ENCODE measurements at regions of chr6 and their contacts with region 1.

Region 1: GRCh38 chr6:33391278-33391921 is at the start of gene KIFC1:
- DNase-seq: peak; percentile 100
- H3K4me3 ChIP-seq: peak within 1 kb of the TSS; percentile 67 to 93 (median 91)
- H3K27ac ChIP-seq: peak within 1 kb of the TSS; percentile 88
- H3K4me1 ChIP-seq: peaks cover 37% of the 10 kb centered on the region
- H3K27me3 ChIP-seq: no peaks in the 10 kb centered on the region
- CTCF ChIP-seq: peak; percentile 88 to 94
- total RNA-seq, gene KIFC1: 2.8 to 36.7 TPM

Region 2: GRCh38 chr6:33208091-33208967 is 183.1 kb before region 1 on chr6 and contains the start of gene RING1:
- CTCF ChIA-PET with region 1: no interaction called
- dilution Hi-C with region 1: no loop called
- in situ Hi-C with region 1: no loop called
- intact Hi-C with region 1: no loop called
- DNase-seq: peak; percentile 55
- H3K4me3 ChIP-seq: peak within 1 kb of the TSS; percentile 81 to 98 (median 91)
- H3K27ac ChIP-seq: peak within 1 kb of the TSS; percentile 85
- H3K4me1 ChIP-seq: peaks cover 31% of the 10 kb centered on the region
- H3K27me3 ChIP-seq: peaks cover 2% of the 10 kb centered on the region
- CTCF ChIP-seq: no peak
- total RNA-seq, gene RING1: 13.0 to 31.8 TPM

Region 3: GRCh38 chr6:33454009-33454946 is 62.9 kb after region 1 on chr6 and contains the start of gene ZBTB9:
- CTCF ChIA-PET with region 1: no interaction called
- dilution Hi-C with region 1: no loop called
- in situ Hi-C with region 1: no loop called
- intact Hi-C with region 1: loop called (anchors 1 kb)
- DNase-seq: peak; percentile 96
- H3K4me3 ChIP-seq: peak within 1 kb of the TSS; percentile 73 to 97 (median 92)
- H3K27ac ChIP-seq: peak within 1 kb of the TSS; percentile 61
- H3K4me1 ChIP-seq: peaks cover 5% of the 10 kb centered on the region
- H3K27me3 ChIP-seq: no peaks in the 10 kb centered on the region
- CTCF ChIP-seq: no peak
- total RNA-seq, gene ZBTB9: 5.7 to 10.3 TPM